ENCODE measurements at regions of chr13 and their contacts with region 1.

Region 1: GRCh38 chr13:29850224-29850898 is at the start of gene UBL3:
- DNase-seq: peak; percentile 62
- ATAC-seq: peak; percentile 84
- H3K4me3 ChIP-seq: peak within 1 kb of the TSS; percentile 77
- H3K27ac ChIP-seq: peak within 1 kb of the TSS; percentile 54
- H3K4me1 ChIP-seq: no peaks in the 10 kb centered on the region
- H3K27me3 ChIP-seq: no peaks in the 10 kb centered on the region
- CTCF ChIP-seq: no peak
- EP300 ChIP-seq: no peak
- POLR2A ChIP-seq: peak; percentile 87
- RAD21 ChIP-seq: no peak
- polyA plus RNA-seq, gene UBL3: 5.5 to 6.1 TPM

Region 2: DNA sequence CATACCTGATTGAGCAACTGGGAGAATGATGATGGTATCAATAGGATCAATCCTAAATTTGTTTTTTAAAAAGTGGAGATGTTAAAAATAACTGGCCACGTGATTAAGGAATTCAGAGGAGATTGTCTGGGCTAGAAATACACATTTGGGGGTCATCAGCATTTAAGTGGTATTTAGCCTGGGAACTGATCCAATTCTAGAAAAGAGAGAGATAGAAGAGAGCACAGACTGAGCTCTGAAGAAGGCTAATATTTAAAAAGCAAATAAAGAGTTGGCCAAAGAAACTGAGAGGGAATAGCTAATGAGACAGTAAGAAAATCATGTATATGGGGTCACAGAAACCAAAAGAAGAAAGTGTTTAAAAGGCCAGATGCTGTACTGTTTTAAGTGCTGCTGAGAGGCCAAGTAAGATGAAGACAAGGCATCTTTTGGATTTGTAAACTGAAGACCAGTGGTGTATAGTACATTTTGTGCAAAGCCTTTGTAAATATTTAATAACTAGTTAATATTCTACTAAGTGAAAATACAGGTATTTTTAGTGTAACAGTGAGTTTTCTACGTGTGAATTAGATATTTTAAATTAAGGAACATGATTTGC is 40.1 kb before region 1 on chr13:
- CTCF ChIA-PET with region 1: interaction called, 8 read pairs
- POLR2A ChIA-PET with region 1: interaction called, 3 read pairs
- RAD21 ChIA-PET with region 1: interaction called, 84 read pairs
- SMC1A ChIA-PET with region 1: interaction called, 181 read pairs
- in situ Hi-C with region 1: no loop called
- intact Hi-C with region 1: loop called (anchors 5 kb)
- DNase-seq: no peak
- ATAC-seq: peak; percentile 48
- H3K4me3 ChIP-seq: no peak overlapping the region
- H3K27ac ChIP-seq: no peak overlapping the region
- H3K4me1 ChIP-seq: peaks cover 11% of the 10 kb centered on the region; the same call in 1 of the 2 replicates
- H3K27me3 ChIP-seq: no peaks in the 10 kb centered on the region
- CTCF ChIP-seq: no peak
- EP300 ChIP-seq: no peak
- POLR2A ChIP-seq: no peak
- RAD21 ChIP-seq: no peak

Region 3: GRCh38 chr13:29835280-29836061 is 14.9 kb before region 1 on chr13:
- CTCF ChIA-PET with region 1: interaction called, 21 read pairs
- POLR2A ChIA-PET with region 1: interaction called, 3 read pairs
- RAD21 ChIA-PET with region 1: interaction called, 11 read pairs
- SMC1A ChIA-PET with region 1: interaction called, 18 read pairs
- in situ Hi-C with region 1: no loop called
- intact Hi-C with region 1: no loop called
- DNase-seq: no peak
- ATAC-seq: peak; percentile 81
- H3K4me3 ChIP-seq: no peak overlapping the region
- H3K27ac ChIP-seq: no peak overlapping the region
- H3K4me1 ChIP-seq: no peaks in the 10 kb centered on the region
- H3K27me3 ChIP-seq: no peaks in the 10 kb centered on the region
- CTCF ChIP-seq: no peak
- EP300 ChIP-seq: no peak
- POLR2A ChIP-seq: no peak
- RAD21 ChIP-seq: no peak

Region 4: GRCh38 chr13:29923554-29924481 is 73.5 kb after region 1 on chr13:
- CTCF ChIA-PET with region 1: interaction called, 11 read pairs
- POLR2A ChIA-PET with region 1: no interaction called
- RAD21 ChIA-PET with region 1: interaction called, 9 read pairs
- SMC1A ChIA-PET with region 1: interaction called, 14 read pairs
- in situ Hi-C with region 1: no loop called
- intact Hi-C with region 1: loop called (anchors 5 kb)
- DNase-seq: no peak
- ATAC-seq: peak; percentile 89
- H3K4me3 ChIP-seq: no peak overlapping the region
- H3K27ac ChIP-seq: no peak overlapping the region
- H3K4me1 ChIP-seq: peaks cover 5% of the 10 kb centered on the region; the same call in 1 of the 2 replicates
- H3K27me3 ChIP-seq: no peaks in the 10 kb centered on the region
- CTCF ChIP-seq: peak; percentile 49 to 89 (median 89)
- EP300 ChIP-seq: no peak
- POLR2A ChIP-seq: no peak
- RAD21 ChIP-seq: peak; percentile 58

Region 5: DNA sequence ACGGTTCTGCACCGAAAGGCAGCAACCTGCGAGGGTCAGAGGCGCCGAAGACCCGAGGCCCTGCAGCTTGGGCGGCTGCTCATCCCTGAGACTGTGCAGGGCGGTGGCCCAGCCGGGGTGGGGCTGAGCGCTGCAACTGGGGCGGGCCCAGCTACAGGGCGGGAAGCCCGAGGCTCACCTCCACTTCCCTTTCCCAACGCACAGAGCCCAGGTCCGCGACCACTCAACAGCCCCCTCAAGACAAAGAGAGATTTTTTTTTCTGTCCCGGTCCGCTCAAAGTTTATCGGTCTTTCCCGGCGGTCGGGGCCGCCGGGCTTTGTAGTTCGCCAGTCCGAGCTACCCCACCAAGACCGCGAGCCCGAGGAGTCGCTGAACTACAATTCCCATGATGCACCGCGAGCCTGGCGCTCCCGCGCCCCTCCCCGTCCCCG is 456.4 kb after region 1 on chr13:
- CTCF ChIA-PET with region 1: no interaction called
- POLR2A ChIA-PET with region 1: no interaction called
- RAD21 ChIA-PET with region 1: no interaction called
- SMC1A ChIA-PET with region 1: no interaction called
- in situ Hi-C with region 1: no loop called
- intact Hi-C with region 1: no loop called
- DNase-seq: peak; percentile 66
- ATAC-seq: peak; percentile 89
- H3K4me3 ChIP-seq: peak overlapping the region; percentile 67
- H3K27ac ChIP-seq: peak overlapping the region; percentile 74
- H3K4me1 ChIP-seq: peaks cover 18% of the 10 kb centered on the region
- H3K27me3 ChIP-seq: no peaks in the 10 kb centered on the region
- CTCF ChIP-seq: no peak
- EP300 ChIP-seq: no peak
- POLR2A ChIP-seq: peak; percentile 71
- RAD21 ChIP-seq: no peak

Measured in GM12878 (cell line).